ENCODE measurements at regions of chr22 and their contacts with region 1.

Region 1: GRCh38 chr22:36781656-36782627 is 6.0 kb upstream of the IFT27 start:
- DNase-seq: no peak
- H3K4me3 ChIP-seq: no peak overlapping the region
- H3K27ac ChIP-seq: peak overlapping the region; percentile 33
- H3K4me1 ChIP-seq: peaks cover under 1% of the 10 kb centered on the region
- H3K27me3 ChIP-seq: no peaks in the 10 kb centered on the region
- CTCF ChIP-seq: peak; percentile 81 to 85 (median 85)
- POLR2A ChIP-seq: no peak

Region 2: GRCh38 chr22:36010882-36011281 is 771.1 kb before region 1 on chr22:
- intact Hi-C with region 1: no loop called
- DNase-seq: no peak
- H3K4me3 ChIP-seq: no peak overlapping the region
- H3K27ac ChIP-seq: peak overlapping the region; percentile 39
- H3K4me1 ChIP-seq: peaks cover 77% of the 10 kb centered on the region
- H3K27me3 ChIP-seq: no peaks in the 10 kb centered on the region
- CTCF ChIP-seq: no peak
- POLR2A ChIP-seq: no peak

Region 3: GRCh38 chr22:36725356-36726006 is 56.5 kb before region 1 on chr22:
- intact Hi-C with region 1: no loop called
- DNase-seq: no peak
- H3K4me3 ChIP-seq: no peak overlapping the region
- H3K27ac ChIP-seq: no peak overlapping the region
- H3K4me1 ChIP-seq: no peaks in the 10 kb centered on the region
- H3K27me3 ChIP-seq: no peaks in the 10 kb centered on the region
- CTCF ChIP-seq: no peak
- POLR2A ChIP-seq: no peak

Region 4: GRCh38 chr22:36977947-36978660 is 196.2 kb after region 1 on chr22:
- intact Hi-C with region 1: loop called (anchors 10 kb)
- DNase-seq: no peak
- H3K4me3 ChIP-seq: peak overlapping the region; percentile 34
- H3K27ac ChIP-seq: peak overlapping the region; percentile 10
- H3K4me1 ChIP-seq: peaks cover 11% of the 10 kb centered on the region
- H3K27me3 ChIP-seq: no peaks in the 10 kb centered on the region
- CTCF ChIP-seq: peak; percentile 91 to 97 (median 94)
- POLR2A ChIP-seq: no peak

Region 5: GRCh38 chr22:37166675-37167066 is 384.7 kb after region 1 on chr22:
- intact Hi-C with region 1: no loop called
- DNase-seq: no peak
- H3K4me3 ChIP-seq: peak overlapping the region in 1 of 2 donors; percentile 31
- H3K27ac ChIP-seq: peak overlapping the region; percentile 58
- H3K4me1 ChIP-seq: peaks cover 14% of the 10 kb centered on the region
- H3K27me3 ChIP-seq: no peaks in the 10 kb centered on the region
- CTCF ChIP-seq: peak in 2 of 3 experiments; percentile 73 to 77
- POLR2A ChIP-seq: no peak

Measured in vagina (tissue), 2 donors.